Activated naive CD8-positive, alpha-beta T cell treated with anti-CD3 and anti-CD28 coated beads, Interleukin-2, amount 10 ng/mL, durations not matched to agents 7 days and 5 days (primary cell): ENCODE measurements at regions of chr19 and their contacts with region 1.

Region 1: DNA sequence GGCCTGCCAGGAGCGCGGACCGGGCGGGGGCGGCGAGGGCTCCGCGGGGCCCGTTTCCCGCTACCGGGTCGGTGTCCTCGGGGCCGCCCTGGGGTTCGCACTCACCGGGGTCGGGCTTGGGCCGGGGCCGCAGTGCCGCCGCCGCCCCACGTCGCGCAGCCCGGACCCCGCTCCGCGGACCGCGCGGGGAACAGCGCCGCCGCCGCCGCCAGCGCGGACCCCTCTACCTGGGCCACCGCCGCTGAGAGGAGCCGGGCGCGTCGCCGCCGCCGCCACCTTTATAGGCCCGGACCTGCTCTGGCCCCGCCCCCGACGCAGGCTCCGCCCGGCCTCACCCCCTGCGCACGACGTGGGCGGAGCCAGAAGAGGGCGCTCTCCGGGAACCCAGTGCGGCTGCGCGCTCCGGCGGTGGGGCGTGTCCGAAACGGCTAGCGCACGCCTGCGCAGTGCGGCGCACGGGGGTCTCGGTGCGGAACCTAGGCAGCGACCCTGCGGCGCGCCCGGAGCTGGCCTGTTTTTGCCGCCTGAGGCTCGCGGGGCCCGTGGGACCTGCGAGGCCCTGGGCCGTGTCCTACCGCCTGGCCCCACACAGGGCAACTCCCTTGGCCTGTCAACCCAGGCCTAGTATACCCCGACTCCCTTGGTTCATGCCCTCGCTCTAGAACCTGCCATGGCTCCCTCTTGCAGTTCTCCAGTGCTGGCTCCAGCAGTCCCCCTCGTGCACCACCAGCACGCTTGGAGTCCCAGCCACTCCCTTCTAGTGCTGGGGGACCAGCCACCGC is at the start of gene MKNK2:
- DNase-seq: peak; percentile 99
- ATAC-seq: peak; percentile 70
- H3K4me3 Mint-ChIP-seq: peak within 1 kb of the TSS; percentile 91
- H3K27ac Mint-ChIP-seq: peak within 1 kb of the TSS; percentile 96
- H3K4me1 Mint-ChIP-seq: peaks cover 30% of the 10 kb centered on the region
- H3K27me3 Mint-ChIP-seq: no peaks in the 10 kb centered on the region
- total RNA-seq, gene MKNK2: 319 to 341 TPM

Region 2: GRCh38 chr19:1942078-1942933 is 108.9 kb before region 1 on chr19:
- POLR2A ChIA-PET with region 1: interaction called, 10 read pairs
- DNase-seq: peak; percentile 81
- ATAC-seq: peak; percentile 48
- H3K4me3 Mint-ChIP-seq: peak overlapping the region; percentile 97
- H3K27ac Mint-ChIP-seq: peak overlapping the region; percentile 95
- H3K4me1 Mint-ChIP-seq: peaks cover 23% of the 10 kb centered on the region
- H3K27me3 Mint-ChIP-seq: no peaks in the 10 kb centered on the region

Region 3: GRCh38 chr19:2032296-2032941 is 18.8 kb before region 1 on chr19:
- POLR2A ChIA-PET with region 1: interaction called, 24 read pairs
- DNase-seq: no peak
- ATAC-seq: peak; percentile 51
- H3K4me3 Mint-ChIP-seq: peak overlapping the region; percentile 66
- H3K27ac Mint-ChIP-seq: peak overlapping the region; percentile 82
- H3K4me1 Mint-ChIP-seq: peaks cover 22% of the 10 kb centered on the region
- H3K27me3 Mint-ChIP-seq: no peaks in the 10 kb centered on the region

Region 4: GRCh38 chr19:2061495-2062381 is 10.6 kb after region 1 on chr19:
- POLR2A ChIA-PET with region 1: interaction called, 73 read pairs
- DNase-seq: peak; percentile 100
- ATAC-seq: peak; percentile 91
- H3K4me3 Mint-ChIP-seq: peak overlapping the region; percentile 91
- H3K27ac Mint-ChIP-seq: peak overlapping the region; percentile 90
- H3K4me1 Mint-ChIP-seq: peaks cover 19% of the 10 kb centered on the region
- H3K27me3 Mint-ChIP-seq: no peaks in the 10 kb centered on the region

Region 5: GRCh38 chr19:2070436-2070827 is 19.2 kb after region 1 on chr19:
- POLR2A ChIA-PET with region 1: interaction called, 10 read pairs
- DNase-seq: no peak
- ATAC-seq: no peak
- H3K4me3 Mint-ChIP-seq: no peak overlapping the region
- H3K27ac Mint-ChIP-seq: no peak overlapping the region
- H3K4me1 Mint-ChIP-seq: peaks cover 13% of the 10 kb centered on the region
- H3K27me3 Mint-ChIP-seq: no peaks in the 10 kb centered on the region

Region 6: GRCh38 chr19:2084993-2085720 is 34.0 kb after region 1 on chr19:
- POLR2A ChIA-PET with region 1: interaction called, 56 read pairs
- DNase-seq: peak; percentile 93
- ATAC-seq: peak; percentile 56
- H3K4me3 Mint-ChIP-seq: peak overlapping the region; percentile 97
- H3K27ac Mint-ChIP-seq: peak overlapping the region; percentile 99
- H3K4me1 Mint-ChIP-seq: peaks cover 60% of the 10 kb centered on the region
- H3K27me3 Mint-ChIP-seq: no peaks in the 10 kb centered on the region

Region 7: DNA sequence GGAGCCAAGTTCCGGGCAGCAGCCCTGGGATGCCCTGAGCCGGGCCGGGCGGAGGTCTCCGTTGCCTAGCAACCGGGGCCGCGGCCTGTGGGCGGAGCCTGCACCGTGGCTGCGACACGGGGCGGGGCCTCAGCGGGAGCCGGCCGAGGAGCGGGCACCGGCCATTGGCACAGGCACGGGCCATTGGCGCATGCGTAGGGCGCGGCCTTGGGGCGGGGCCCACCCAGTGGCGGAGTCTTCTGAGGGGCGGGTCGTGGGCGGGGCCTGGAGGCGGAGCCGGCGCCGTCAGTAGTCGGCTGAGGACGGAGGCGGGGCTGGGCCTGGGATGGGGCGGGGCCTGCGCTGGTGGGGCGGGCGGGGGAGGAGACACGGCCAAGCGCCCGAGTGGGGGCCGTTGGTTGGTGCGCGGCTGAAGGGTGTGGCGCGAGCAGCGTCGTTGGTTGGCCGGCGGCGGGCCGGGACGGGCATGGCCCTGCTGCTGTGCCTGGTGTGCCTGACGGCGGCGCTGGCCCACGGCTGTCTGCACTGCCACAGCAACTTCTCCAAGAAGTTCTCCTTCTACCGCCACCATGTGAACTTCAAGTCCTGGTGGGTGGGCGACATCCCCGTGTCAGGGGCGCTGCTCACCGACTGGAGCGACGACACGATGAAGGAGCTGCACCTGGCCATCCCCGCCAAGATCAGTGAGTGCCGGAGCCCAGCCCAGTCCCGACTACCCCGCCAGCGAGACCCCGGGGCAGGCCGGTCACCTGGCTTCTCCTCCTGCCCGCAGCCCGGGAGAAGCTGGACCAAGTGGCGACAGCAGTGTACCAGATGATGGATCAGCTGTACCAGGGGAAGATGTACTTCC is 45.5 kb after region 1 on chr19 and contains the start of gene IZUMO4:
- POLR2A ChIA-PET with region 1: interaction called, 18 read pairs
- DNase-seq: peak; percentile 100
- ATAC-seq: peak; percentile 88
- H3K4me3 Mint-ChIP-seq: peak within 1 kb of the TSS; percentile 90
- H3K27ac Mint-ChIP-seq: peak within 1 kb of the TSS; percentile 96
- H3K4me1 Mint-ChIP-seq: peaks cover 11% of the 10 kb centered on the region
- H3K27me3 Mint-ChIP-seq: no peaks in the 10 kb centered on the region
- total RNA-seq, gene IZUMO4: 16.0 to 17.7 TPM